Caco-2 (cell line): ENCODE measurements at regions of chr11 and their contacts with region 1.

Region 1: DNA sequence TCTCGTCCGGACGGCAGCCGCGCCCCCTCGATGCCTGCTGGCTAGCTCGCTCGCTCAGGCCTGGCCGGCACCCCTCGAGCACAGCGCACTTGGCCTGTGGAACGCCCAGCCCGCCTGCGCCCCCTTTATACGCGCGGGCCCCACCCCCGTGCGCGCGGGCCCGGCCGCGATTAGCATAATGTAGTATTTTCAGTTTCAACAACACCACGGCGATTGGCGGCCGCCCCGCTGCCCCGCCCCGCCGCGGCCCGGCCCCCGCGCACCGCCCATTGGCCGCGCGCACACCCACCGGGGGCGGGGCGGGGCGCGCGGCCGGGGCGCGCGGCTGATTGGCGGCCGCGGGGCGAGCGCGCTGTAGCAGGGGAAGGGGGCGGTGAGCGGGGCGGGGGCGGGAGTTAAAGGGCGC is at the start of gene CDKN1C:
- DNase-seq: peak; percentile 83 to 87
- H3K4me3 ChIP-seq: peak within 1 kb of the TSS; percentile 59
- H3K4me3 Mint-ChIP-seq: peak within 1 kb of the TSS; percentile 91
- H3K27ac Mint-ChIP-seq: no peak within 1 kb of the TSS
- H3K4me1 ChIP-seq: peaks cover 39% of the 10 kb centered on the region
- H3K4me1 Mint-ChIP-seq: peaks cover 12% of the 10 kb centered on the region
- H3K27me3 ChIP-seq: no peaks in the 10 kb centered on the region
- H3K27me3 Mint-ChIP-seq: peaks cover 8% of the 10 kb centered on the region
- CTCF ChIP-seq: no peak
- total RNA-seq, gene CDKN1C: 15.0 and 25.5 TPM in 2 replicates

Region 2: DNA sequence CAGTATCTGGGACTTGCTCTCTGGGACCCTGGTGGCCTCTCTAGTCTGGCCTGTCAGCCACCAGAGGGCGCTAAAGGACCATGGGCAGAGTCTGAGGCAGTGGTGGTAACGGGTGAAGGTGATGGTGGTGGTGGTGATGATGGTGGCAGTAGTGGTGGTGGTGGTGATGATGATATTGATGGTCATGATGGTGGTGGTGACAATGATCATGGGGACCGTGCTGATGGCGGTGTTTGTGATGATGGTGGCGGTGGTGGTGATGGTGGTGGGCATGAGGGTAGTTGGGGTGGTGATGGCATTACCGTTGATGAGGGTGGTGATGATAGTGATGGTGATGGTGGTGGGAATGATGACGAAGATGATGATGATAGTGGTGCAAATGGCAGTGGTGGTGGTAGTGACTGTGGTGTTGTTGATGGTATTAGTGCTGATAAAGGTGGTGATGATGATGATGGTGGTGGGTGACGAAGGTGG is 457.3 kb before region 1 on chr11:
- CTCF ChIA-PET with region 1: no interaction called
- POLR2A ChIA-PET with region 1: no interaction called
- intact Hi-C with region 1: loop called (anchors 5 kb)
- DNase-seq: peak; percentile 68 to 80
- H3K4me3 ChIP-seq: no peak overlapping the region
- H3K4me3 Mint-ChIP-seq: no peak overlapping the region
- H3K27ac Mint-ChIP-seq: no peak overlapping the region
- H3K4me1 ChIP-seq: no peaks in the 10 kb centered on the region
- H3K4me1 Mint-ChIP-seq: no peaks in the 10 kb centered on the region
- H3K27me3 ChIP-seq: no peaks in the 10 kb centered on the region
- H3K27me3 Mint-ChIP-seq: no peaks in the 10 kb centered on the region
- CTCF ChIP-seq: peak; percentile 74 to 92

Region 3: GRCh38 chr11:2691991-2692875 is 193.4 kb before region 1 on chr11:
- CTCF ChIA-PET with region 1: interaction called, 4 read pairs
- POLR2A ChIA-PET with region 1: no interaction called
- intact Hi-C with region 1: loop called (anchors 1 kb)
- DNase-seq: peak; percentile 46 to 55
- H3K4me3 ChIP-seq: no peak overlapping the region
- H3K4me3 Mint-ChIP-seq: no peak overlapping the region
- H3K27ac Mint-ChIP-seq: no peak overlapping the region
- H3K4me1 ChIP-seq: peaks cover 19% of the 10 kb centered on the region
- H3K4me1 Mint-ChIP-seq: peaks cover 34% of the 10 kb centered on the region
- H3K27me3 ChIP-seq: no peaks in the 10 kb centered on the region
- H3K27me3 Mint-ChIP-seq: no peaks in the 10 kb centered on the region
- CTCF ChIP-seq: peak; percentile 33 to 70